ENCODE measurements at regions of chr10 and their contacts with region 1.

Region 1: DNA sequence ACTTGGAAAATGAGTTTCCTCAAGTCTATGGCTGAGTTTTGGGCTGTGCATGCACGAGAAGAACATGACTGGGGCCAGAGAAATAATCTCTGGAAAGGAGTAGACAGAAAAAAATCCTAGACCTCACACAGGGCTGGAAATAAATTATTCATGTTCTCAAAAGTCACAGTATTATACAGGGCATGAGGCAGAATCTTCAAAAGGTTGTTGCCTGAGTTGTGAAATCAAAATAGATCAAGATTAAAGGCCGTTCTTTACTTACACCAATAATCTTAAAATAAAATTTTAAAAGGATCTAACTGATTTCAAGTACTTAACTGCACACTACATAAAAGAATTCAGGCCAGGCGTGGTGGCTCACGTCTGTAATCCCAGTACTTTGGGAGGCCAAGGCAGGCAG is 14.1 kb upstream of the CREM start:
- DNase-seq: no peak
- ATAC-seq: no peak
- H3K4me3 ChIP-seq: no peak overlapping the region
- H3K27ac ChIP-seq: no peak overlapping the region
- H3K4me1 ChIP-seq: no peaks in the 10 kb centered on the region
- H3K27me3 ChIP-seq: no peaks in the 10 kb centered on the region
- CTCF ChIP-seq: no peak
- EP300 ChIP-seq: no peak
- POLR2A ChIP-seq: no peak
- RAD21 ChIP-seq: no peak

Region 2: GRCh38 chr10:34967335-34967880 is 145.2 kb before region 1 on chr10:
- CTCF ChIA-PET with region 1: no interaction called
- POLR2A ChIA-PET with region 1: no interaction called
- in situ Hi-C with region 1: no loop called
- intact Hi-C with region 1: no loop called
- DNase-seq: no peak
- ATAC-seq: no peak
- H3K4me3 ChIP-seq: no peak overlapping the region
- H3K27ac ChIP-seq: no peak overlapping the region
- H3K4me1 ChIP-seq: no peaks in the 10 kb centered on the region; a peak in 1 of 5 replicates
- H3K27me3 ChIP-seq: peaks cover 18 to 36% of the 10 kb centered on the region in 2 experiments; a peak in 4 of 5 replicates
- CTCF ChIP-seq: no peak
- EP300 ChIP-seq: no peak
- POLR2A ChIP-seq: no peak
- RAD21 ChIP-seq: no peak

Region 3: DNA sequence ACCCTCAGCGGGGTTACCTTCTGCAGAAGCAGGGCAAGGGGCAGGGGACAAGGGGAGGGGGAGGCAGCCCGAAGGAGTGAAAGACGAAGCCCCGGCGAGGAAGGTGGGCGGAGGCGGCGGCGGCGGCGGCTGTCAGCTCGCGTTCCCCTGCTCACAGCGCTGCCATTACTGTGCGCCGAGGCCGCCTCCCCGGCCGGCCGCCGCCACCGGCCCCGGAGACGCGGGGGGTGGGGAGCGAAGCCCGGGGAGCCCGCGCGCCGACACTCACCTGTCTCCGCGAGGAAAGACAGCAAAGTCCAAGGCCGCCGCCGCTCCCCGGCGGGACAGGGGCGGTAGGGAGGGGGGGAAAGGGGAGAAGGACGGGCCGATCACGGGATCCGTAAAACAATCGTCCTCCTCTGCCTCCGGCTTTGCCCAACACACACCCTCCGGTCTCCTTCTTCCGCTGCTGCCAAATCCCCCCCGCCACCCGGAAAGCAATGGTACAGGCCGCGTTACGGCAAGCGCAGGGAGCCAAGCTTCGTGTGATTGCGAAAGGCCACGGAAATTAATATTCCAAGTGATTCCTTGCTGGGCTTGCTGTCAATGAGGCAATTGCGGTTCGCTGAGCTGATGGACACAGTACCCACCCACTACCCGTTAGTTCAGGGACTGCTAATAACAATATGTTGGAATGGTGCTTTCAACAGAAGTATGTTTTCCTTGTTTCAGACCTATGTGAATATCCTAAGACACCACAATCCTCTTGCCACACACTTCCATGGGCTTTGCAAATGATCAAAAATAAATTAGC is 22.2 kb before region 1 on chr10 and contains the start of gene CUL2:
- CTCF ChIA-PET with region 1: no interaction called
- POLR2A ChIA-PET with region 1: no interaction called
- in situ Hi-C with region 1: no loop called
- intact Hi-C with region 1: no loop called
- DNase-seq: peak; percentile 92 to 95 (median 93)
- ATAC-seq: peak; percentile 98
- H3K4me3 ChIP-seq: peak within 1 kb of the TSS; percentile 71
- H3K27ac ChIP-seq: peak within 1 kb of the TSS; percentile 95
- H3K4me1 ChIP-seq: peaks cover 0 to 15% of the 10 kb centered on the region in 2 experiments; a peak in 3 of 5 replicates
- H3K27me3 ChIP-seq: no peaks in the 10 kb centered on the region
- CTCF ChIP-seq: no peak
- EP300 ChIP-seq: peak; percentile 30; the same call in 1 of the 2 replicates
- POLR2A ChIP-seq: no peak; the same call in 1 of the 2 replicates
- RAD21 ChIP-seq: no peak
- polyA plus RNA-seq, gene CUL2: 18.1 to 21.1 TPM

Region 4: GRCh38 chr10:35133586-35133985 is 21.0 kb after region 1 on chr10:
- CTCF ChIA-PET with region 1: no interaction called
- POLR2A ChIA-PET with region 1: no interaction called
- in situ Hi-C with region 1: no loop called
- intact Hi-C with region 1: no loop called
- DNase-seq: no peak
- ATAC-seq: no peak
- H3K4me3 ChIP-seq: no peak overlapping the region
- H3K27ac ChIP-seq: no peak overlapping the region
- H3K4me1 ChIP-seq: peaks cover 0 to 2% of the 10 kb centered on the region in 2 experiments; a peak in 2 of 5 replicates
- H3K27me3 ChIP-seq: no peaks in the 10 kb centered on the region
- CTCF ChIP-seq: no peak
- EP300 ChIP-seq: no peak
- POLR2A ChIP-seq: no peak
- RAD21 ChIP-seq: no peak

Region 5: DNA sequence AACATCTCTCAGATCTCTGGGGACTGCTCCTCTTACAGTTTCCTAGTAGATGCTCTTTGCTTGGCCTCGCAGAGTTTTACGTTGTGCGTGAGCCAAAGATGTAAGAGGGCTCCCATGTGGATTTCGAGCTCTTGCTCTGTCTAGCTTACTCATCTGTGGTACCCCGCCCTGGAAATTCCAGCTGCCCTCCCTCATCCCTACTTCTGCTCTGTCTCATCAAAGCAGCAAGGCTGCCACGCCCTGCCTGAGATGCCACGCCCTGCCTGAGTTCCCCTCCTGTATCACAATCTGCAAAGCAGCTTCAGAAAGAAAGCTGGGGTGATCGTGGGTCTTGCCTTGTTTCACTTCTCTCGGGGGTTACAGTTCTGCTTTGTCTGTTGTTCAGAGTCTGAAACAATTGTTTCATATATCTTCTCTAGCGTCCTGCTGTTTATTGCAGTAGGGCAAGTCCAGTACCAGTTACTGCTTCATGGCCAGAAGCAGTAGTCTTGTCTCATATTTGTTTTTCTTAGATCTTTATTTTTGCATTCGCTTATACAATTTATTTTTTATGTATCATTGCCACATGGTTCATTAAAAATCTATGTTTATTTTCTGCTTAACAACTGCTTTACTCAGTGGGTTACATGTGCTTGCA is 187.6 kb after region 1 on chr10:
- CTCF ChIA-PET with region 1: no interaction called
- POLR2A ChIA-PET with region 1: no interaction called
- in situ Hi-C with region 1: no loop called
- intact Hi-C with region 1: no loop called
- DNase-seq: peak; percentile 37 to 70 (median 48)
- ATAC-seq: peak; percentile 96
- H3K4me3 ChIP-seq: no peak overlapping the region
- H3K27ac ChIP-seq: no peak overlapping the region
- H3K4me1 ChIP-seq: no peaks in the 10 kb centered on the region; a peak in 1 of 5 replicates
- H3K27me3 ChIP-seq: peaks cover 0 to 4% of the 10 kb centered on the region in 2 experiments; a peak in 3 of 5 replicates
- CTCF ChIP-seq: no peak
- EP300 ChIP-seq: no peak
- POLR2A ChIP-seq: no peak
- RAD21 ChIP-seq: no peak

Region 6: DNA sequence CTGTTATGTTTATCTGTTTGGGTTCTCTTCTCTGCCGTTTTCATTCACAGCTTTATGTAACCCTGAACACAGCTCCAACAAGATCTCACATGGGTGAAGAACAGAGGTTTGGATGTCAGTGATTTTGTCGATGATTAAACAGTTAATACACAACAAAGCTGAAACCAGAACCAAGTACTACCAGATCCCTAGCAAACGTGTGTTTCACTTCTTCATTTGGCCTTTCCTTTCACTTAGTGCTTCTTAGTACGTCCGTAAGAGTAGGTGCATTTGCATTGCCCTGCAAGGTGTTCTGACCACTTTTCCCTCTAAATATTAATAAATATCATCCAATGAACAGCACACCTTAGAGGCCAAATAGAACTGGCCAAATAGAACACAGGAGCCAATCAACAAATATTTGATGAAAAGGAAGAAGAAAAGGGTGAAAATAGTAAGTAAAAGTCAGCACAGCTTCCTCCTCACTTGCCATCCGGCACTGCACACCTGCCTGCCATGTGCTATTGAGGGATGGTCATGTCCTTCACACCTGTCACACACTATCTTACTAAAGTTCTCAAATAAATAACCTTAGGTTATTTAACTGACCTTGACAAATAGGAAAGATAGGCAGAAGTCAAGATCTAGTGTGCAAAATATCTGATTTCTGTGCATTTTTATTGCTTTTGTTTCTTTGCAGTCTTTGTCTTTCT is 1760.3 kb after region 1 on chr10:
- CTCF ChIA-PET with region 1: no interaction called
- POLR2A ChIA-PET with region 1: no interaction called
- in situ Hi-C with region 1: no loop called
- intact Hi-C with region 1: loop called (anchors 10 kb)
- DNase-seq: no peak
- ATAC-seq: no peak
- H3K4me3 ChIP-seq: no peak overlapping the region
- H3K27ac ChIP-seq: no peak overlapping the region
- H3K4me1 ChIP-seq: no peaks in the 10 kb centered on the region
- H3K27me3 ChIP-seq: no peaks in the 10 kb centered on the region
- CTCF ChIP-seq: no peak
- EP300 ChIP-seq: no peak
- POLR2A ChIP-seq: no peak
- RAD21 ChIP-seq: no peak

Measured in K562 (cell line).